Activated CD4-positive, alpha-beta memory T cell treated with anti-CD3 and anti-CD28 coated beads for 36 hours (primary cell): ENCODE measurements at regions of chr11 and their contacts with region 1.

Region 1: DNA sequence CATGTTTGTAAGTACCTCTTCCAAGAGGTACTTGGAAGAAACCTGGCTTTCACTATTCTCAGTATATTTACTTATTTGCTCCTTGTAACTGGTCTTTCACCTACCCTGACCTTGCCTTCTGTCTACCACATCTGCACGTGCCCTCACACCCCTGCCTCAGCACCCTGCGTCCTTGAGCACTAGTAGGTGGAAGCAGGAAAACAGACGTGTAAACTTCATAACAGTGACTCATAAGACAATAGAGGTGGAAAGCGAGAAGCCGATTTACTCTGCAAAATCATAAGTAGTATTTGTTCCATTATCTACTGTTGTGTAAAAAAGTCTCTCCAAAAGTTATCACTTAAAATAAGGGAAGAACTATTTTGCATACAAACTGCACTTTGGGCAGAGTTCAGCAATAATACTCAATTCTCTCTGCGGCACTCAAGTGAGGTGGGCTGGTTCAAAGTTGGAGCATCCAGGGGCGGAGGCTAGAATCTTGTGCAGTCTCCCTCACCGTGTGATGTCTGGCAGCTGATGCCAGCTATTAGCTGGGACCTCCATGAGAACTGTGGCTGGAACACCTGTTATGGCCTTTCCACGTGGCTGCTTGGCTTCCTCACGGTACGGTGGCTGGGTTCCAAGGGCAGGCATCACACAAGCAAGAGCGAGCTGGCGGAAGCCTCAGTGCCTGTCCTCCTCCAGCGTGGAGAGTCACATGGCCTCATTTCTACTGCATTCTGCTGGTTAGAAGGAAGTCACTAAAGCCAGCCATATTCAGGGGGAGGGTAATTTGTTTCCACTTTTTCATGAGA is 30.4 kb downstream of the PACS1 start:
- DNase-seq: peak; percentile 77
- H3K4me3 Mint-ChIP-seq: peak overlapping the region; percentile 66
- H3K27ac Mint-ChIP-seq: peak overlapping the region; percentile 90
- H3K4me1 Mint-ChIP-seq: peaks cover 64% of the 10 kb centered on the region
- H3K27me3 Mint-ChIP-seq: no peaks in the 10 kb centered on the region

Region 2: GRCh38 chr11:65726660-65727059 is 373.8 kb before region 1 on chr11:
- CTCF ChIA-PET with region 1: no interaction called
- POLR2A ChIA-PET with region 1: no interaction called
- intact Hi-C with region 1: no loop called
- DNase-seq: no peak
- H3K4me3 Mint-ChIP-seq: no peak overlapping the region
- H3K27ac Mint-ChIP-seq: no peak overlapping the region
- H3K4me1 Mint-ChIP-seq: no peaks in the 10 kb centered on the region
- H3K27me3 Mint-ChIP-seq: peaks cover under 1% of the 10 kb centered on the region

Region 3: DNA sequence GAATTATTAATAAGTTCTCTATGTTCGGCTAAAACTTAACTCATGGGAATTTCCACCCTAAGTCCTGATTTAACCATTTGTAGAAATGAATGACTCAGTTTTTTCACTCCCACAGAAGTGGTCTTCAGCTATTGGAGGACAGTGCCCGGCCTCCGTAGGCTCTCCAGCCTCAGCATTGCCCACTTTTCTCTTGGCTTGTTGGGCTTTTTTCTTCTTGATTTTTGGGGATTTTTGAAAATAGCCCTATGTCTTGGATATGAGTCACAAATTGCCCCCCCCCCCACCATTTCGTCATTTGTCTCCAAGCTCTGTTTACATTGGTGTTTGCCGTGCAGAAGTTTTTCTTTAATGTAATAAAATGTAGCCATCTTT is 36.3 kb after region 1 on chr11:
- CTCF ChIA-PET with region 1: no interaction called
- POLR2A ChIA-PET with region 1: no interaction called
- intact Hi-C with region 1: loop called (anchors 2 kb)
- DNase-seq: peak; percentile 48
- H3K4me3 Mint-ChIP-seq: no peak overlapping the region
- H3K27ac Mint-ChIP-seq: peak overlapping the region; percentile 65
- H3K4me1 Mint-ChIP-seq: peaks cover 65% of the 10 kb centered on the region
- H3K27me3 Mint-ChIP-seq: no peaks in the 10 kb centered on the region